ENCODE measurements at regions of chr14 and their contacts with region 1.

Region 1: GRCh38 chr14:81085596-81085995 is 130.2 kb downstream of the TSHR start:
- DNase-seq: no peak
- H3K4me3 Mint-ChIP-seq: no peak overlapping the region
- H3K27ac Mint-ChIP-seq: no peak overlapping the region
- H3K4me1 Mint-ChIP-seq: no peaks in the 10 kb centered on the region
- H3K27me3 Mint-ChIP-seq: no peaks in the 10 kb centered on the region

Region 2: GRCh38 chr14:81051547-81051946 is 34.0 kb before region 1 on chr14:
- intact Hi-C with region 1: no loop called
- DNase-seq: no peak
- H3K4me3 Mint-ChIP-seq: no peak overlapping the region
- H3K27ac Mint-ChIP-seq: no peak overlapping the region
- H3K4me1 Mint-ChIP-seq: no peaks in the 10 kb centered on the region
- H3K27me3 Mint-ChIP-seq: no peaks in the 10 kb centered on the region

Region 3: GRCh38 chr14:81129242-81129641 is 43.6 kb after region 1 on chr14:
- intact Hi-C with region 1: loop called (anchors 1 kb)
- DNase-seq: no peak
- H3K4me3 Mint-ChIP-seq: no peak overlapping the region
- H3K27ac Mint-ChIP-seq: no peak overlapping the region
- H3K4me1 Mint-ChIP-seq: no peaks in the 10 kb centered on the region
- H3K27me3 Mint-ChIP-seq: peaks cover 3% of the 10 kb centered on the region

Measured in activated CD4-positive, alpha-beta T cell treated with anti-CD3 and anti-CD28 coated beads, Interleukin-2, amount 10 ng/mL, durations not matched to agents 24 days and 14 days (primary cell).